ENCODE measurements at regions of chr9 and their contacts with region 1.

Region 1: GRCh38 chr9:124297553-124297905 is 39.8 kb downstream of the NEK6 start:
- DNase-seq: peak; percentile 95
- H3K4me3 ChIP-seq: no peak overlapping the region
- H3K27ac ChIP-seq: peak overlapping the region; percentile 71
- H3K4me1 ChIP-seq: peaks cover 70% of the 10 kb centered on the region
- H3K27me3 ChIP-seq: no peaks in the 10 kb centered on the region
- CTCF ChIP-seq: no peak
- POLR2A ChIP-seq: peak; percentile 68

Region 2: DNA sequence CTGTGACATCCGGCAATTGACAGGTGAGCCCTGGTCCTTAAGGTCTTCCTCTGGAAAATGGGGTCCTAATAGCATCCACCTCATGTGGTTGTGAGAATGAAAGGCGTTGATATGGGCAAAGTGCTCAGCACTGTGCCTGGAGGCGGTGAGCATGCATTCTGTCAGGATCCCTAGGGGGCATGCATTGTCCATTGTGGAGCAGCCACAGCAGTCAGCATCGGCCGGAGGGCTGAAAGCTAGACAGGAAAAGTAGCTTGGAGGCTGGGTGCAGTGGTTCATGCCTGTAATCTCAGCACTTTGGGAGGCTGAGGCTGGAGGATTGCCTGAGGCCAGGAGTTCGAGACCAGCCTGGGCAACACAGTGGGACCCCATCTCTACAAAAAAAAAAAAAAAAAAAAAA is 163.8 kb before region 1 on chr9:
- CTCF ChIA-PET with region 1: interaction called, 14 read pairs
- POLR2A ChIA-PET with region 1: no interaction called
- dilution Hi-C with region 1: no loop called
- intact Hi-C with region 1: no loop called
- DNase-seq: peak; percentile 68
- H3K4me3 ChIP-seq: no peak overlapping the region
- H3K27ac ChIP-seq: no peak overlapping the region
- H3K4me1 ChIP-seq: peaks cover 7% of the 10 kb centered on the region
- H3K27me3 ChIP-seq: no peaks in the 10 kb centered on the region
- CTCF ChIP-seq: peak; percentile 36 to 64
- POLR2A ChIP-seq: no peak

Region 3: DNA sequence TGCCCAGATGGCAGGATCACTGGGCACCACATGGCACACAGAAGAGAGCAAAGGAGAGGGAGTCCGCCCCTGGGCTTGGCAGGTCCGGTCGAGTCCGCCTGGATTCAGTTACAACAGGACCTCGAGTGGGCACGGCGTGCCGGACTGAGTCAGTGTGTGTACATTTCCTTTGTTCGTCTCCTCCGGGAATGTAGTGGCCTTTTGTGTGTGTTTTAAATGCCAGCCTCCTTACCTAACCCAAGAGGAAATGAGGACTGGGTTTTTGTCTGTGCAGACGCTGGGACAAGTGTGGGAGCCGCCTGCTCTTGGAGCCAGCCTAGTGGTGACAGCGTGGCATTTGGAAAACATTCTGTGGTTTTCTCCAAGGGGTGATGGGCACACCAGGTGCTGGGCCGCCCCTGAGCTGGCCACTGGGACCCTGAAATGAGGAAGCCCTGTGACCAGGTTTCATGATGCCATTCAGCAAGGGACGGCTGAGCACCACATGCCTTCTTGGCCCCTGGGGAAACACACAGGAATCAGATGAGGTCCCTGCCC is 30.2 kb before region 1 on chr9:
- CTCF ChIA-PET with region 1: interaction called, 5 read pairs
- POLR2A ChIA-PET with region 1: no interaction called
- dilution Hi-C with region 1: no loop called
- intact Hi-C with region 1: loop called (anchors 1 kb)
- DNase-seq: peak; percentile 89
- H3K4me3 ChIP-seq: no peak overlapping the region
- H3K27ac ChIP-seq: peak overlapping the region; percentile 87
- H3K4me1 ChIP-seq: peaks cover 72% of the 10 kb centered on the region
- H3K27me3 ChIP-seq: no peaks in the 10 kb centered on the region
- CTCF ChIP-seq: peak in 1 of 2 donors; percentile 15
- POLR2A ChIP-seq: peak; percentile 79

Region 4: GRCh38 chr9:124280176-124280691 is 17.3 kb before region 1 on chr9:
- CTCF ChIA-PET with region 1: interaction called, 5 read pairs
- POLR2A ChIA-PET with region 1: no interaction called
- dilution Hi-C with region 1: no loop called
- intact Hi-C with region 1: loop called (anchors 2 kb)
- DNase-seq: peak; percentile 94
- H3K4me3 ChIP-seq: no peak overlapping the region
- H3K27ac ChIP-seq: peak overlapping the region; percentile 92
- H3K4me1 ChIP-seq: peaks cover 62% of the 10 kb centered on the region
- H3K27me3 ChIP-seq: no peaks in the 10 kb centered on the region
- CTCF ChIP-seq: no peak
- POLR2A ChIP-seq: peak; percentile 26

Region 5: DNA sequence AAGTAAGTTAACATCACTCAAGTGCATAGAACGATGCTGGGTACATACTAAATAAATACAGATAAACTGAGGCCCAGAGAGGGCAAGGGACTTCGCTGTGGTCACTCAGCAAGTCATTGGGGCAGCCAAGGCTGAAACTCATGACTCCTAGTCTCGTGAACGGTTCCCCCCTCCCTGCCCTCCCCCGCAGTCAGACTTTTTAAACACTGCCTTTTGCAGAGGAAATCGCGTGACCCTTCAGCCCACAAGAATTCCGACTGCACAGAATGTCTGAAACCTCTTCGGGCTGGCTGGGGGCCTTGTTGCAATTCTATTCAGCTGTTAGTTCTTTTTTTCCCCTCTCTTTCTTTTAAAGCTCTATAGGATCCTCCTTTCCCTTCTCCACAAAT is 11.6 kb before region 1 on chr9:
- CTCF ChIA-PET with region 1: interaction called, 5 read pairs
- POLR2A ChIA-PET with region 1: no interaction called
- dilution Hi-C with region 1: no loop called
- intact Hi-C with region 1: loop called (anchors 1 kb)
- DNase-seq: peak; percentile 90
- H3K4me3 ChIP-seq: no peak overlapping the region
- H3K27ac ChIP-seq: peak overlapping the region; percentile 89
- H3K4me1 ChIP-seq: peaks cover 59% of the 10 kb centered on the region
- H3K27me3 ChIP-seq: no peaks in the 10 kb centered on the region
- CTCF ChIP-seq: no peak
- POLR2A ChIP-seq: no peak

Region 6: DNA sequence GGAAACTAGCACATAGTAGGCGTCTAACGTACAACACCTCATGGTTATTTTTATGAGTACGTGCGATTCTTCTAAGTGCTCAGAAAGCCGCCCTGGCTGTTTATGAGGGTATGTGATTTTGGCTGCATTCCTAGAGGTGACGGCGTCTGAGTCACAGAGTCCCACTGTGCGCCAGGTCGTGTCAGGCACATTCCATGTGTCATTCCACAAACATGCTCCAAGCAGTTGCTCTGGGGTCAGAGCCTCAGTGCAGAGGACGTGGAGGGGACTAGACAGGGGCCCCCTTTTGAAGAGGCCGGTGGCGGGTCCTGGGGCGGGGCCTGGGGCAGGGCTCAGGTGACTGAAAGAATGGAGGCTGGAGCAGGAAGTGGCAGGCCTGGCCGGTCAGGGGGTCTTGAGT is 12.1 kb after region 1 on chr9:
- CTCF ChIA-PET with region 1: interaction called, 8 read pairs
- POLR2A ChIA-PET with region 1: no interaction called
- dilution Hi-C with region 1: no loop called
- intact Hi-C with region 1: loop called (anchors 1 kb)
- DNase-seq: peak; percentile 97
- H3K4me3 ChIP-seq: no peak overlapping the region
- H3K27ac ChIP-seq: peak overlapping the region; percentile 84
- H3K4me1 ChIP-seq: peaks cover 31% of the 10 kb centered on the region
- H3K27me3 ChIP-seq: no peaks in the 10 kb centered on the region
- CTCF ChIP-seq: no peak
- POLR2A ChIP-seq: no peak

Region 7: GRCh38 chr9:124457887-124458431 is 160.4 kb after region 1 on chr9:
- CTCF ChIA-PET with region 1: no interaction called
- POLR2A ChIA-PET with region 1: no interaction called
- dilution Hi-C with region 1: no loop called
- intact Hi-C with region 1: no loop called
- DNase-seq: no peak
- H3K4me3 ChIP-seq: no peak overlapping the region
- H3K27ac ChIP-seq: no peak overlapping the region
- H3K4me1 ChIP-seq: no peaks in the 10 kb centered on the region
- H3K27me3 ChIP-seq: peaks cover 0 to 3% of the 10 kb centered on the region in 2 experiments
- CTCF ChIP-seq: no peak
- POLR2A ChIP-seq: no peak

Measured in endothelial cell of umbilical vein (primary cell).